ENCODE measurements at regions of chr7 and their contacts with region 1.

Region 1: GRCh38 chr7:95871078-95871782 is 98.9 kb downstream of the DYNC1I1 start:
- DNase-seq: peak; percentile 40 to 70 (median 61)
- H3K4me3 ChIP-seq: no peak overlapping the region
- H3K27ac ChIP-seq: no peak overlapping the region
- H3K4me1 ChIP-seq: no peaks in the 10 kb centered on the region
- H3K27me3 ChIP-seq: peaks cover 0 to 11% (median 0%) of the 10 kb centered on the region in 5 experiments

Region 2: DNA sequence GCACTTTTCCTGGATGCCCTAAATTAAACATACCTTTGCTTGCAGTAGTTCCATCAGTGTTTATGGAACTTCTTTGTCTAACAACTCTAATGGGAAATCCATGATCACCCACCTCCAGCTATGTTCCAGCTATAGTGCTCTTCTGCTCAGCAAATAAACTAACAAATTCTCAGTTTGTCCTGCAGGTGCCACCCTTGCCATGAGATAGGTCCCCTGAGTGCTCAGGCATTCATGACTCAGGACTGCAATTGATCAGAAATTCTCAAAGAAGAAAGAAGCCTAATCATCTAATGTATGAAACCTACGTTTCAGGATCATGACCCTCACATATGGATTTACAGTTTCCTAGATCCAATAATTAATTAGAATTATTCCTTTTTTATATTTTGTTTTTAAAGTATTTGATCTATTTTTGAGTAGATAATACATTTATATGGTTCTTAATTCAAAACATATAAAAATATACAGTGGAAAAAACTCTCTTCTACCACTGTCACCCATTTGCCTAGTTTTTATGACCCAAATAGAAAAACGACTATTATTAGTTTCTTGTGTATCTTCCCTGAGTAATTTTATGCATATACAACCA is 147.5 kb before region 1 on chr7:
- CTCF ChIA-PET with region 1: interaction called, 131 read pairs
- POLR2A ChIA-PET with region 1: no interaction called
- DNase-seq: peak; percentile 63 to 78 (median 74)
- H3K4me3 ChIP-seq: no peak overlapping the region
- H3K27ac ChIP-seq: no peak overlapping the region
- H3K4me1 ChIP-seq: no peaks in the 10 kb centered on the region
- H3K27me3 ChIP-seq: peaks cover 0 to 2% (median 0%) of the 10 kb centered on the region in 5 experiments